PC-3 (cell line): ENCODE measurements at regions of chr6 and their contacts with region 1.

Region 1: DNA sequence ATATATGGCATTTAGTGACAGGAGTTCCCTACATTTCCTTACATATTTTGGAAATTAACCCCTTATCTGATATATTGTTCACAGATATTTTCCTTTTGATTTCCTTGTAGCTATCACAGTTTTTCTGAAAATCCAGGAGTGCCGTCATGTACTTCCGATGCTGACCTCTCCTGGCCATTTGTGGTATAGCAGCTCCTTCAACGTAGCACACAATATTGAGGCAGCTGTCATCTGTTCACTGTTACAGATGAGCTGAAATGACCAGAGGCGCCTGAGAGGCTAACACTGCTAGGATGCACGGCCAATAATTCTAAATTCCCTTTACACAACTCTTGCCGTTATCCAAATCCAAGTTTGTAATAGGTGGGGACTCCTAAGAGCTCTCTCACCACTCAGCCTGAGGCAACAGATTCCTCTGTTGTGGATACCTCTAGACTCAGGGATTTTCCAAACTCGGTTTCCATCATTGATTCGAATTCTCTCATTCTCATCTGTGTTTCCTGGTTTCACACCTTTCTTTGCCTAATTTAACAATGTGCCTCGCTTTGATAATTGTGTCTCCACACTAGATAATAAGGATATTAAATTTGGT is 53.0 kb downstream of the MMUT start:
- DNase-seq: peak; percentile 91
- ATAC-seq: peak; percentile 89
- H3K4me3 ChIP-seq: no peak overlapping the region
- H3K27ac ChIP-seq: no peak overlapping the region
- H3K4me1 ChIP-seq: peaks cover 4% of the 10 kb centered on the region; the same call in 1 of the 2 replicates
- H3K27me3 ChIP-seq: no peaks in the 10 kb centered on the region
- CTCF ChIP-seq: peak; percentile 84

Region 2: DNA sequence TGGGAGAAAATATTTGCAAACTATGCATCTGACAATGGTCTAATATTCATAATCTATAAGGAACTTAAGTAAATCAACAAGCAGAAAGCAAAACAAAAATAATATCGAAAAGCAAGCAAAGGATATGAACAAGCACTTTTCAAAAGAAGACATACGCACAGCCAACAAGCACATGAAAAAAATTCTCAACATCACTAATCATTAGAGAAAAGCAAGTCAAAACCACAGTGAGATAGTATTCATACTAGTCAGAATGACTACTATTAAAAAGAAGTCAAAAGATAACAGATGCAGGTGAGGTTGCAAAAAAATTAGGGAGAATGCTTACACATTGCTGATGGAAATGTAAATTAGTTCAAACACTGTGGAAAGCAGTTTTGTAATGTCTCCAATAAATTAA is 357.1 kb before region 1 on chr6:
- CTCF ChIA-PET with region 1: no interaction called
- POLR2A ChIA-PET with region 1: no interaction called
- intact Hi-C with region 1: loop called (anchors 5 kb)
- DNase-seq: peak; percentile 57
- ATAC-seq: no peak
- H3K4me3 ChIP-seq: no peak overlapping the region
- H3K27ac ChIP-seq: peak overlapping the region; percentile 94
- H3K4me1 ChIP-seq: peaks cover 44% of the 10 kb centered on the region
- H3K27me3 ChIP-seq: no peaks in the 10 kb centered on the region
- CTCF ChIP-seq: no peak

Region 3: DNA sequence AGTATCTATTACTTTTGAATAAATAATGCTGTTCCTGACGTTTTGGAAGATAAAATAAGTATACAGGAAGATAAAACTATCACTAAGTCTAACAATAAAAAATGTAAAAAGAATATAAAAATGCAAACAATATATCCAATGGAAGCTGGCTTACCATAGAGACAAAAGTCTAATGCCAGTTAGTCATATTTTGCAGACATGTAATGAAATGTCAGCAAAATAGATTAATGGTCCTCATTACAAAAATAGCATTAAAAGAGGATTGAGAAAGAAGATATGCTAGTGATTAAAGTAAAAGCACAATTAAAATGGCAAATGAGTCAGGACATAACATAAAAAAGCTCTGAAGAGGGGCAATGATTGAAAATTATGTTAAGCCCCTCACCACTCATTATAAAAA is 212.0 kb before region 1 on chr6:
- CTCF ChIA-PET with region 1: interaction called, 3 read pairs
- POLR2A ChIA-PET with region 1: no interaction called
- intact Hi-C with region 1: loop called (anchors 5 kb)
- DNase-seq: no peak
- ATAC-seq: no peak
- H3K4me3 ChIP-seq: no peak overlapping the region
- H3K27ac ChIP-seq: no peak overlapping the region
- H3K4me1 ChIP-seq: no peaks in the 10 kb centered on the region
- H3K27me3 ChIP-seq: no peaks in the 10 kb centered on the region
- CTCF ChIP-seq: no peak

Region 4: GRCh38 chr6:49300443-49300842 is 109.6 kb before region 1 on chr6:
- CTCF ChIA-PET with region 1: no interaction called
- POLR2A ChIA-PET with region 1: no interaction called
- intact Hi-C with region 1: loop called (anchors 2 kb)
- DNase-seq: peak; percentile 60
- ATAC-seq: peak; percentile 87
- H3K4me3 ChIP-seq: no peak overlapping the region
- H3K27ac ChIP-seq: peak overlapping the region; percentile 51
- H3K4me1 ChIP-seq: peaks cover 18% of the 10 kb centered on the region
- H3K27me3 ChIP-seq: no peaks in the 10 kb centered on the region
- CTCF ChIP-seq: no peak

Region 5: GRCh38 chr6:49326337-49326736 is 83.7 kb before region 1 on chr6:
- CTCF ChIA-PET with region 1: no interaction called
- POLR2A ChIA-PET with region 1: no interaction called
- intact Hi-C with region 1: loop called (anchors 5 kb)
- DNase-seq: peak; percentile 85
- ATAC-seq: peak; percentile 94
- H3K4me3 ChIP-seq: peak overlapping the region; percentile 36; the same call in 1 of the 2 replicates
- H3K27ac ChIP-seq: peak overlapping the region; percentile 67
- H3K4me1 ChIP-seq: peaks cover 23% of the 10 kb centered on the region
- H3K27me3 ChIP-seq: no peaks in the 10 kb centered on the region
- CTCF ChIP-seq: no peak

Region 6: DNA sequence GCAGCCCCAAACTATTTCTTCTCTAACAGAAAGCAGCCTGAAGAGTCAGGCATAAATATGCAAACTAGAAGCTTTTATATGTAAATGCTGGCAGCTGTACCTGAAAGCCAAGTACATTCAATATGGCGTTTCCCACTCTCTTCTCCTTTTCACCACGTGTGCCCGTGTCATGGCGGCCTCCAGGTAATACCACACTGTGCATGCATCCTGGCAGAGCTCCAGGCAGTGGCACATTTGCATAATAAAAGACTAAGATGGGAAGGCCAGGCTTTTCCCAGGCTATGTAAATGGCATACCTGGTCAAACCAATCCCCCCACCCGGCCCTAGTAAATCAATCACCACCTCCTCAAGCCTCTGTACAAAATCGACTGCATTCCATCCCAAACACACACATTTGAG is 67.6 kb before region 1 on chr6:
- CTCF ChIA-PET with region 1: no interaction called
- POLR2A ChIA-PET with region 1: no interaction called
- intact Hi-C with region 1: no loop called
- DNase-seq: no peak
- ATAC-seq: no peak
- H3K4me3 ChIP-seq: no peak overlapping the region
- H3K27ac ChIP-seq: no peak overlapping the region
- H3K4me1 ChIP-seq: no peaks in the 10 kb centered on the region
- H3K27me3 ChIP-seq: no peaks in the 10 kb centered on the region
- CTCF ChIP-seq: no peak

Region 7: DNA sequence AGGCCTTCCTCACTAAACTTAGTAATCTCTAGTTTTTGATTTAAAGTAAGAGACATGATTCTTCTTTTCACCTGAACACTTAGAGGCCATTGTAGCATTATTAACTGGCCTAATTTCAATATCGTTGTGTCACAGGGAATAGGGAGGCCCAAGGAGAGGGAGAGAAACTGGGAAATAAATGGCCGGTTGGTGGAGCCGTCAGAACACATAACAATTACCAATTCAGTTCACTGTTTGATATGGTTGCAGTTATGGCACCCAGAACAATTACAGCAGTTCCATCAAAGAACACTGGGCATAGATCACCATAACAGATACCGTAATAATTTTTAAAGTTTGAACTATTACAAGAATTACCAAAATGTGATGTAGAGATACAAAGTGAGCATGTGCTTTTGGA is 80.6 kb after region 1 on chr6:
- CTCF ChIA-PET with region 1: no interaction called
- POLR2A ChIA-PET with region 1: no interaction called
- intact Hi-C with region 1: no loop called
- DNase-seq: no peak
- ATAC-seq: no peak
- H3K4me3 ChIP-seq: no peak overlapping the region
- H3K27ac ChIP-seq: no peak overlapping the region
- H3K4me1 ChIP-seq: no peaks in the 10 kb centered on the region
- H3K27me3 ChIP-seq: no peaks in the 10 kb centered on the region
- CTCF ChIP-seq: no peak